ENCODE measurements at regions of chr4 and their contacts with region 1.

Region 1: DNA sequence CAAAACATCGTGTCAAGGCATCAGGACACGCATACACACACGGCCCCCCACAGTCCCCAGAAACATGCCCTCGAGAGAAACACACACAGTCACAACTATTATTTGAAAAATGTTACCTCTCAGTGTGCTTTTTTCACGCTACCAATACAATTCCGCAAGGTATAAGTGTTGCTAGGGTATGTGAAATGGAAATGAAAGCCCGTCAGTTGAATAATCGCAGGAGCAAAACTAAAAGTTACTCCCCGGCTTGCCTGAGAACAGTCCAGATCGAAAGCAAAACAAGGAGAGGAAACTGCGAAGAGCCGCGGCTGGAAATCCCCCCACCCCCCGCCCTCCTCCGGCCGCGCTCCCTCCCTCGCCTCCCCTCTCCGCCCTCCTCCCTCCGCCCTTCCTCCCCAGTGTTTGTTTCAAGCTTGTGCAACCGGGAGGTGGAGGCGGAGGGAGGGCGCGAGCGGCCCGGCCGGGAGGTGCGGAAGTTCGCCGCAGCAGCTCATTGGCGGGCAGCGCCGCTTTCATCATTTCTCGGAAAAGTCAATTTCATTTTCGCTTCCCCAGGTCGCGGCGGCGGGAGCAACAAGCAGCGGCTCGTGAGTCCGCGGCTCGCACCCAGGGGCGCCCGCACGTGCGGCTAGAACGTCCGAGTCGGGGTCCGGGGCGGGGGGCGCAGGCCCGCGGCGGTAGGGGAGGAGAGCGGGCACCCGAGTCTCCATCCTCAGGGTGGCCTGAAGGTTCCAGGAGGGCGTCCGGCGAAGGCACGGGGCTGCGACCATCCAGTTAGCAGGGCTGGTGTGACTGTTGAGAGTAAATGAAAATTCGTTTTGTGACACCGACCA is at the start of gene IRF2:
- DNase-seq: peak; percentile 98
- H3K4me3 ChIP-seq: peak within 1 kb of the TSS; percentile 90 to 99 (median 90)
- H3K27ac ChIP-seq: peak within 1 kb of the TSS; percentile 96
- H3K4me1 ChIP-seq: peaks cover 13% of the 10 kb centered on the region
- H3K27me3 ChIP-seq: no peaks in the 10 kb centered on the region
- CTCF ChIP-seq: no peak
- total RNA-seq, gene IRF2: 22.0 to 23.3 TPM

Region 2: DNA sequence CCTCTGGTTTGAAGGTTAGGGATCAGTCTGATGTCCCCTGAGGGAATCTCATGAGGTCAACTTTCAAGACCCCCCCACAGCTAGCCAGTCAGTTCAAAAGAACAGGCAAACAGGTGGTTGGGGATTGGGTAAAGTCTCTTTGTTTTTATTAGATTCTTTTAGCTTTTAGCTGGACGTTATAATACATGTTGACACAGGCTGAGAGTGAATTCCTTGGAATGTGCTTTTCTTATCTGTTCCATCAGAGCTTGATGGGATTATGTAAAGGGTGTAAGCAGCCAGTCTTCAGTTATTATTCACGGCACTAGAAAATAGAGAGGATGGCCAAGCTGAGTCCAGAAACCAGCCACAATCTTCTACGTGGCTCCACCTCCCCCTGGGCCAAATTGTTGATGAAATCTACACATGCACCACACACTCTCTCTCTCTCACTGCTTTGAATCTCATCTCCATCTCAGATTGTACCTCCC is 277.6 kb before region 1 on chr4:
- CTCF ChIA-PET with region 1: no interaction called
- dilution Hi-C with region 1: no loop called
- in situ Hi-C with region 1: no loop called
- intact Hi-C with region 1: no loop called
- DNase-seq: peak; percentile 70
- H3K4me3 ChIP-seq: no peak overlapping the region
- H3K27ac ChIP-seq: no peak overlapping the region
- H3K4me1 ChIP-seq: peaks cover 5% of the 10 kb centered on the region
- H3K27me3 ChIP-seq: no peaks in the 10 kb centered on the region
- CTCF ChIP-seq: no peak

Region 3: GRCh38 chr4:184287697-184288255 is 186.7 kb before region 1 on chr4:
- CTCF ChIA-PET with region 1: no interaction called
- dilution Hi-C with region 1: no loop called
- in situ Hi-C with region 1: no loop called
- intact Hi-C with region 1: loop called (anchors 1 kb)
- DNase-seq: peak; percentile 50
- H3K4me3 ChIP-seq: no peak overlapping the region
- H3K27ac ChIP-seq: no peak overlapping the region
- H3K4me1 ChIP-seq: peaks cover 8% of the 10 kb centered on the region
- H3K27me3 ChIP-seq: no peaks in the 10 kb centered on the region
- CTCF ChIP-seq: peak; percentile 4 to 47

Region 4: DNA sequence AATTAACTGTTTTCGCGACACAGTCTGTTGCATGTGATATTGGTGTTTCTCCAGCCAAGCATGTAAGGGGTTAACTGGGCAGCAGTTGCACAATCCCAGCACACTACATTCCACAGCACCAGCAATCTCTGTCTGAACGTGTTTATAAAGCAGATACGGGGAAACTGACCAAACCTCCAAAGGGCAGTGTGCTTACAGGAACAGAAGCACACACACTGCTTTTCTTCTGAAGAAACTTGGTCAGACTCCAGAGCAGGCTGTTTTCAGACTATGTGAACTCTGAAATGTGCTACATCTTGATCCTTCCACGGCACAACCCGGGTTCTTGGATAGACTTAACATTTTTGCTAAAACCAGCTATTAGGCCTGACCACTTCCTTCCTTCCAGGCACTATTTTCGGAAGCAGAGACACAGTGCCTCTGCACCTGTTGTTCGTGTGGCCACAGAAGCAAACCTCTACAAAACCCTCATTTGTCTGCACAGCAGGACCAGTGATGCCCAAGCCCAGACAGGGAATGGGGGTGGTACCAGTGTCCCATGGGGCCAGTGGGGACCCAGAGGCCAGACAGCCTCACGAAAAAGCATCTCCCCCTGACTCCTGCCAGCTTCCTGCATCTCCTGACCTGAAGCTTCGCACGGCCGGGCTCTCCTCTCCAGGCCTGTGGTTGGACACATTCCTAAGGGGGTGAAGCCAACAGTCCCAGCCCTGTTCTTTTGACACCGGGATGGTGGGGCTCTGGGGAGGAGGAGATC is 90.2 kb before region 1 on chr4:
- CTCF ChIA-PET with region 1: no interaction called
- dilution Hi-C with region 1: no loop called
- in situ Hi-C with region 1: no loop called
- intact Hi-C with region 1: loop called (anchors 1 kb)
- DNase-seq: peak; percentile 93
- H3K4me3 ChIP-seq: peak overlapping the region; percentile 35 to 52 (median 45)
- H3K27ac ChIP-seq: peak overlapping the region; percentile 96
- H3K4me1 ChIP-seq: peaks cover 41% of the 10 kb centered on the region
- H3K27me3 ChIP-seq: no peaks in the 10 kb centered on the region
- CTCF ChIP-seq: no peak

Region 5: DNA sequence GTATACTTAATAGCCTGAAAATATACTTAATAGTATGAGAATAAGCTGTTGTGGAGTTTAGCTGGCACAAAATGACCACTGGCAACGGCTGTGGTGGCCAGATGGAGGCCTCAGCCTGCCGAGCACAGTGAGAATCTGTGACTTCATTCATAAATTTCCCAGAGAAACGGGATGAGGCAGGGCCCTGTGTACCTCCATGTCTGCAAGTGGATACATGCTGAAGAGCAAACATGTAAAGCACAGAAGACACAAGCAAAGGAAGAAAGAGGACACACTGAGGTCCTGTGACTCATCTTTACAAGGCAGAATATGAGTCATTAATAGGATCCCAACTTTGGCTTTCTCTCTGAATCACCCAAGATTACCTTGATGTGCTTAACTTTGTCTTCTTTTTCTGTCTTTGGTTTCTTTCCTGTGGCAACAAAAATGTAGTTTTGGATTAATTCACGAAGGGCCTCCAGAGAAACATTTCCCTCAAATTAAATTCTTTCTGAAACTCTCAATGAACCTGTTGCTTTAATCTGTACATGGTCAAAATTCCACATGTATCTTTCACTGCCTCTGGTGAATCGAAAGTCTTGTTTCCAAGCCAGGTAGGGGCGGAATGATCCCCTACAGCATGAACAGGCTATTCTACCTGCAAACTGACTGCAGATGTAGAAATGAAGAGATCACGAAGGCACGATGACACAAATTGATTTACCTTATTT is 56.5 kb before region 1 on chr4:
- CTCF ChIA-PET with region 1: no interaction called
- dilution Hi-C with region 1: no loop called
- in situ Hi-C with region 1: loop called in 1 of 2 experiments (anchors 5 kb)
- intact Hi-C with region 1: loop called (anchors 2 kb)
- DNase-seq: peak; percentile 99
- H3K4me3 ChIP-seq: peak overlapping the region in 2 of 3 experiments; percentile 3 to 12
- H3K27ac ChIP-seq: peak overlapping the region; percentile 89
- H3K4me1 ChIP-seq: peaks cover 29% of the 10 kb centered on the region
- H3K27me3 ChIP-seq: no peaks in the 10 kb centered on the region
- CTCF ChIP-seq: peak; percentile 6 to 41

Region 6: DNA sequence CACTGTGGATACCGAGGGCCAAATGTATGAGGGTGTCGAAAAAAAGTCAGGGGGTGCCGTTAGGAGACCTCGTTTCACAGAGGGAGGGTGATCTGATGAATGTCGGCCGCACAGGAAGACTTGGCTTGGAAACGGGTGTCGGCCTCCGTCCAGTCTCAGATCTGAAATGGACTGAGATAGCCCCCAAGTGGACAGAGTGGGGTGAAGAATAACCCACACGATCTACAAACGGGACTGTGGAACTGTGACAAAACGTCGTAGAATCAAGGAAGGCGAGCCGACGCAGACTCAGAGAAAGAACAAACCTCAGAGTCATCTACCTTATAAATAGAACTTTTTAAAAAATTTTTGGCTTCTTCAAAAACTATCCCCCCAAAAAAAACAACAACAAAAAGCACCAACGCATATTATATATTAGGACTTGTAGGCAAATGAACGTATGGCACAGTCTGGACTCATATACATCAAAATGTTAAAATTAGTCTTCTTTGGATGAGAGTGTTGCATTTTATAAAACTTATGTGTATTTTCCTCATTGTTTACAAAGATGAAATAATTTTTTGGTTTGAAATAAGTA is 63.6 kb after region 1 on chr4:
- CTCF ChIA-PET with region 1: no interaction called
- dilution Hi-C with region 1: no loop called
- in situ Hi-C with region 1: no loop called
- intact Hi-C with region 1: loop called (anchors 1 kb)
- DNase-seq: peak; percentile 82
- H3K4me3 ChIP-seq: peak overlapping the region; percentile 63 to 71 (median 67)
- H3K27ac ChIP-seq: peak overlapping the region; percentile 87
- H3K4me1 ChIP-seq: peaks cover 31% of the 10 kb centered on the region
- H3K27me3 ChIP-seq: no peaks in the 10 kb centered on the region
- CTCF ChIP-seq: peak; percentile 46 to 78